ENCODE measurements at regions of chr11 and their contacts with region 1.

Region 1: GRCh38 chr11:65040847-65041621 is at the start of gene SAC3D1:
- DNase-seq: peak; percentile 70 to 95 (median 80)
- ATAC-seq: peak; percentile 87
- H3K4me3 ChIP-seq: peak within 1 kb of the TSS; percentile 82
- H3K4me3 Mint-ChIP-seq: peak within 1 kb of the TSS; percentile 98
- H3K27ac ChIP-seq: peak within 1 kb of the TSS; percentile 56 to 84
- H3K27ac Mint-ChIP-seq: peak within 1 kb of the TSS; percentile 93
- H3K4me1 ChIP-seq: peaks cover 32% of the 10 kb centered on the region
- H3K4me1 Mint-ChIP-seq: peaks cover 20% of the 10 kb centered on the region
- H3K27me3 ChIP-seq: no peaks in the 10 kb centered on the region
- H3K27me3 Mint-ChIP-seq: no peaks in the 10 kb centered on the region
- CTCF ChIP-seq: no peak
- total RNA-seq, gene SAC3D1: 0.49 to 0.78 TPM

Region 2: DNA sequence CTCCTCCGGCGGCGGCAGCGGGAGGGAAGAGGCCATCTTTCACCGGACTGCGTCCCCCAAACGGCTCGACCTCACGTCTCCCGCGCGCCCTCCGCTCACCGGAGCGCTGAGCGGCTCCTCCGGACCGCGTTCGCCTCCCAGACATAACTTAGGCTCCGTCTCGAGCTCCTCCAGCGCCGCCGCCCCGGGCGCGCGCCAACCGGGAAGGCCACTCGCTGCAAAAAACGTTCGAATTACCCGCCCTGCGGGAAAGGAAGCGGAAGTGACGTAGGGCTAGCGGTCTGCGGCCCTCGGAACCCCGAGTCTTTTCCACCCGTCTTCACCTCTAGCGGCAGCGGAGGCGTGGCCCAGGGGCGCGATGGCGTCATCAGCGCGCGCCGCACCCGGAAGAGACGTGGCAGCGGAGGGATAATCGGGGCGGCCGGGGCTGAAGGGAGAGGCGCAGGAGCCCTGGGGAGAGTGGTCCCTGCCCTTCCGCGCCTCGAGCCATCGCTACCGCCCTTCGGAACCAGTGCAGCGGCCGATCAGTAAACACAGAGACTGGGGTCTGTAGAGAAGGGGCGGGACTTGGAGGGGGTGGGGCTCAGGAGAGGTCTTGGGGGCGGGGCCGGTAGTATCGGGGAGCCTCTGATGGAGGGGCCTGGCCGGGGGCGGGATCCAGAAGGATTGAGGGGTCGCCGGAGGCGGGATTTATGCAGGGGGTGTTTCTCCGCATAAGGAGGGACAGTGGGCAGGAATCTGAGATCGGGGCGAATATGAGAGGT is 43.0 kb after region 1 on chr11 and contains the starts of genes CDCA5 and ZFPL1:
- CTCF ChIA-PET with region 1: no interaction called
- POLR2A ChIA-PET with region 1: interaction called, 4 read pairs
- intact Hi-C with region 1: loop called in 1 of 2 experiments (anchors 2 kb)
- DNase-seq: peak; percentile 92 to 98 (median 95)
- ATAC-seq: peak; percentile 87
- H3K4me3 ChIP-seq: peak within 1 kb of the TSS; percentile 80
- H3K4me3 Mint-ChIP-seq: peak within 1 kb of the TSS; percentile 98
- H3K27ac ChIP-seq: peak within 1 kb of the TSS; percentile 86 to 97
- H3K27ac Mint-ChIP-seq: peak within 1 kb of the TSS; percentile 97
- H3K4me1 ChIP-seq: peaks cover 21% of the 10 kb centered on the region
- H3K4me1 Mint-ChIP-seq: peaks cover 33% of the 10 kb centered on the region
- H3K27me3 ChIP-seq: no peaks in the 10 kb centered on the region
- H3K27me3 Mint-ChIP-seq: no peaks in the 10 kb centered on the region
- CTCF ChIP-seq: no peak
- total RNA-seq, gene CDCA5: 0.77 to 0.84 TPM
- total RNA-seq, gene ZFPL1: 46.2 to 47.7 TPM

Measured in CD4-positive, alpha-beta T cell (primary cell).